Mammary epithelial cell (primary cell): ENCODE measurements at regions of chr16 and their contacts with region 1.

Region 1: DNA sequence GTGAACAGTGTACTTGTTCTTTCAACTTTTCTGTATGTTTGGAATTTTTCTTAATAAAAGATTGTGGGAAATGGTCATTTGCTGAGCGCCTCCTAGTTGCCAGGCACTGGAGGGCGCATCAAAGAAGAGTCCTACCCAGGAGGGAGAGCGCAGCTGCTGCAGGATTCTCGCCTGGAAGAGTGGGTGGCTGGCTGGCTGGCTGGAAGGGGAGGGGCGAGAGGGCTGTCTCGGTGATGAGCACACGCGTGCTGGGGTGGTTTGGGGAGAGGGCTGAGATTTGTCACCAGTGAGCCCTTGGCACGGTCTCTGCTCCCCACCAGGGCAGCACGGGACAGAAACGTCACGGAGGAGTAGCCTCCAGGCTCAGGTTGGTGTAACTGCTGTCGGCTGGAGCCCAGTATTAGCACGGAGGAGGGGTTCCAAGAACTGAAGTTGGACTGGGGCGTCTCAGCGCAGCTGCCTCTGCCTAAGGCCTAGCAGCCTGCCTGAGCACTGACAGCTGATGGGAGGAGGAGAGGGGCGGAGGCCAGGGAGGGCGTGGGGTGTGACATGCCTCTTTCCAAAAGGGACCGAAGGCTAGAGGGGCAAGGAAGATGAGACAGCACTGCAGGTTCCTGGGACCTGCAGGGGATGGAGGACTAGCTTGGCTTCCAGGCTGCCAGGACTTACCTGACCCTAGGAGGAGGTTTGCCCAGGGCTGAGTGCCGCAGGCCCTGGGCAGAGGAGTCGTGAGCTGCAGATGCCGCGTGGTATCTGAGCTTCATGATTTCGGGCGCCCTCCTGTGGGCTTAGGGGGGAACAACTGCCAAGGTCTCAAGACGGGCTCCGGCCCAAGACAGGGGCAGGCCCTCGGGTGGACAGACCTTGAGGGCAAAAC is 5.7 kb downstream of the LDHD start:
- DNase-seq: peak; percentile 80
- H3K4me3 ChIP-seq: peak overlapping the region in 2 of 3 experiments; percentile 28 to 42
- H3K27ac ChIP-seq: peak overlapping the region; percentile 57
- H3K4me1 ChIP-seq: peaks cover 42% of the 10 kb centered on the region
- H3K27me3 ChIP-seq: no peaks in the 10 kb centered on the region
- CTCF ChIP-seq: peak; percentile 85 to 94

Region 2: DNA sequence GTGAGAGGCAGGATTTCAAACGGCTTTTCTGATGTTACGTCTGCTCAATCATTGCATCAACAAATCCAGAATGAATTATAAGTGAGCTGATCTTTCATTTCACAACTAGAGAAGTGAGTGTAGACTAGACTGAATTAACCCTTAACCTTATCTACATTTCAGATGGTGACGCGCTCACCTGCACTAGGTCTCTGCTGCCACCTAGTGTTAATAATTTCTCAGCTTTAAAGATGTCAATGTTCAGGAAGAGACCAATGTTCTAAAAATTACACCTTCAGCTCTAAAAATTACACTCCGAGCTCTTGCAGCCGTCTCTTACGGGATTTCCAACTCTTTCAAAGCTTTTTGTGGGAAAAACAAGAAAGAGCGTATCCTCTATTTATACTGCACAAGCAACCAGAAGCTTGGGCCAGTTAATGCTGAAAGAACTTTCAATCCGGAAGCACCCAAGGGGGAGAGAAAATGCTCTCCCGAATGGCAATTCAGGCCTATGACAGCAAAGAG is 248.1 kb before region 1 on chr16:
- CTCF ChIA-PET with region 1: interaction called, 3 read pairs
- dilution Hi-C with region 1: no loop called
- in situ Hi-C with region 1: no loop called
- intact Hi-C with region 1: loop called (anchors 1 kb)
- DNase-seq: peak; percentile 49
- H3K4me3 ChIP-seq: no peak overlapping the region
- H3K27ac ChIP-seq: no peak overlapping the region
- H3K4me1 ChIP-seq: peaks cover 6% of the 10 kb centered on the region
- H3K27me3 ChIP-seq: no peaks in the 10 kb centered on the region
- CTCF ChIP-seq: peak; percentile 78 to 88

Region 3: GRCh38 chr16:74896389-74897240 is 214.3 kb before region 1 on chr16:
- CTCF ChIA-PET with region 1: no interaction called
- dilution Hi-C with region 1: no loop called
- in situ Hi-C with region 1: no loop called
- intact Hi-C with region 1: loop called (anchors 10 kb)
- DNase-seq: peak; percentile 62
- H3K4me3 ChIP-seq: no peak overlapping the region
- H3K27ac ChIP-seq: no peak overlapping the region
- H3K4me1 ChIP-seq: peaks cover 4% of the 10 kb centered on the region
- H3K27me3 ChIP-seq: no peaks in the 10 kb centered on the region
- CTCF ChIP-seq: no peak

Region 4: GRCh38 chr16:74998481-74999218 is 112.2 kb before region 1 on chr16 and contains the start of gene ZNRF1:
- CTCF ChIA-PET with region 1: interaction called, 43 read pairs
- dilution Hi-C with region 1: no loop called
- in situ Hi-C with region 1: loop called (anchors 5 kb)
- intact Hi-C with region 1: loop called (anchors 1 kb)
- DNase-seq: peak; percentile 78
- H3K4me3 ChIP-seq: peak within 1 kb of the TSS; percentile 52 to 77 (median 64)
- H3K27ac ChIP-seq: peak within 1 kb of the TSS; percentile 56
- H3K4me1 ChIP-seq: peaks cover 18% of the 10 kb centered on the region
- H3K27me3 ChIP-seq: no peaks in the 10 kb centered on the region
- CTCF ChIP-seq: peak; percentile 47 to 77
- total RNA-seq, gene ZNRF1: 12.8 to 32.0 TPM

Region 5: DNA sequence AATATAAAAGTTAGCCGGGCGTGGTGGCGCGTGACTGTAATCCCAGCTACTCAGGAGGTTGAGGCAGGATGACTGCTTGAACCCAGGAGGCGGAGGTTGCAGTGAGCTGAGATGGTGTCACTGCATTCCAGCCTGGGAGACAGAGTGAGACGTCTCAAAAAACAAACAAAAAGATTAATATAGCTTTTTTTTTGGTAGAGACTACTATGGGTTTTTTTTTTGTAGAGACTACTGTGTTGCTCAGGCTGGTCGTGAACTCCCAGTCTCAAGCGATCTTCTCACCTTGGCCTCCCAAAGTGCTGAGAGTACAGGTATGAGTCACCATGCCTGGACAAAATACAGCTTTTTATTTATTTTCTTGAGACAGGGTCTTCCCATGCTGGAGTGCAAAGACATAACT is 91.9 kb before region 1 on chr16:
- CTCF ChIA-PET with region 1: no interaction called
- dilution Hi-C with region 1: loop called (anchors 5 kb)
- in situ Hi-C with region 1: no loop called
- intact Hi-C with region 1: no loop called
- DNase-seq: no peak
- H3K4me3 ChIP-seq: no peak overlapping the region
- H3K27ac ChIP-seq: no peak overlapping the region
- H3K4me1 ChIP-seq: no peaks in the 10 kb centered on the region
- H3K27me3 ChIP-seq: no peaks in the 10 kb centered on the region
- CTCF ChIP-seq: no peak